Dorsolateral prefrontal cortex (tissue), 120 donors: ENCODE measurements at regions of chr14 and their contacts with region 1.

Region 1: GRCh38 chr14:56996743-56997399 is 186.6 kb upstream of the OTX2 start:
- DNase-seq: no peak
- H3K4me3 ChIP-seq: no peak overlapping the region
- H3K27ac ChIP-seq: no peak overlapping the region
- H3K27me3 ChIP-seq: peaks cover 0 to 26% (median 3%) of the 10 kb centered on the region in 45 donors
- CTCF ChIP-seq: no peak

Region 2: DNA sequence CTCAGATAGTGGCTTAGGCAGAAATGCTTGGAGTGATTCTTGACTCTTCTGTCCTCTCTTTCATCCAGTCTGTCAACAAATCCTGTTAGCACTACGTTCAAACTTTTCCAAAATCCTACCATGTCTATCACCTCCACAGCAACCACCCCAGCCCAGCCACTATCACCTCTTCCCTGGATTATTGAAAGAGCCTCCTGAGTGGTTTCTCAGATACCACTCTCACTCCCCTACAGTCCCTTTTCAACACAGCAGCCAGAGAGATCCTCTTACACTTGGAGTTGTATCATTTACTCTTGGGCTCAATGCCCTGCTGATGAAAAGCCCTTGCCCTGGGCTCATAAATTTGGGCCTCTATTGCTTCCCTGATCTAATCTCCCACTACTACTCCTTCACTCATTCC is 53.0 kb after region 1 on chr14:
- intact Hi-C with region 1: loop called in 1 of 2 experiments (anchors 2 kb)
- DNase-seq: no peak
- H3K4me3 ChIP-seq: no peak overlapping the region
- H3K27ac ChIP-seq: no peak overlapping the region
- H3K27me3 ChIP-seq: peaks cover 0 to 13% (median 0%) of the 10 kb centered on the region in 45 donors
- CTCF ChIP-seq: no peak